ENCODE measurements at regions of chr6 and their contacts with region 1.

Region 1: GRCh38 chr6:85354761-85355618 is 94.9 kb upstream of the NT5E start:
- DNase-seq: peak; percentile 78
- ATAC-seq: peak; percentile 98
- H3K4me3 Mint-ChIP-seq: no peak overlapping the region
- H3K27ac Mint-ChIP-seq: no peak overlapping the region
- H3K4me1 Mint-ChIP-seq: no peaks in the 10 kb centered on the region
- H3K27me3 Mint-ChIP-seq: no peaks in the 10 kb centered on the region
- CTCF ChIP-seq: peak; percentile 98

Region 2: GRCh38 chr6:85404502-85405174 is 49.6 kb after region 1 on chr6:
- CTCF ChIA-PET with region 1: no interaction called
- POLR2A ChIA-PET with region 1: no interaction called
- DNase-seq: no peak
- ATAC-seq: no peak
- H3K4me3 Mint-ChIP-seq: no peak overlapping the region
- H3K27ac Mint-ChIP-seq: no peak overlapping the region
- H3K4me1 Mint-ChIP-seq: peaks cover 51% of the 10 kb centered on the region
- H3K27me3 Mint-ChIP-seq: peaks cover 2% of the 10 kb centered on the region; the same call in 1 of the 2 replicates
- CTCF ChIP-seq: no peak

Region 3: DNA sequence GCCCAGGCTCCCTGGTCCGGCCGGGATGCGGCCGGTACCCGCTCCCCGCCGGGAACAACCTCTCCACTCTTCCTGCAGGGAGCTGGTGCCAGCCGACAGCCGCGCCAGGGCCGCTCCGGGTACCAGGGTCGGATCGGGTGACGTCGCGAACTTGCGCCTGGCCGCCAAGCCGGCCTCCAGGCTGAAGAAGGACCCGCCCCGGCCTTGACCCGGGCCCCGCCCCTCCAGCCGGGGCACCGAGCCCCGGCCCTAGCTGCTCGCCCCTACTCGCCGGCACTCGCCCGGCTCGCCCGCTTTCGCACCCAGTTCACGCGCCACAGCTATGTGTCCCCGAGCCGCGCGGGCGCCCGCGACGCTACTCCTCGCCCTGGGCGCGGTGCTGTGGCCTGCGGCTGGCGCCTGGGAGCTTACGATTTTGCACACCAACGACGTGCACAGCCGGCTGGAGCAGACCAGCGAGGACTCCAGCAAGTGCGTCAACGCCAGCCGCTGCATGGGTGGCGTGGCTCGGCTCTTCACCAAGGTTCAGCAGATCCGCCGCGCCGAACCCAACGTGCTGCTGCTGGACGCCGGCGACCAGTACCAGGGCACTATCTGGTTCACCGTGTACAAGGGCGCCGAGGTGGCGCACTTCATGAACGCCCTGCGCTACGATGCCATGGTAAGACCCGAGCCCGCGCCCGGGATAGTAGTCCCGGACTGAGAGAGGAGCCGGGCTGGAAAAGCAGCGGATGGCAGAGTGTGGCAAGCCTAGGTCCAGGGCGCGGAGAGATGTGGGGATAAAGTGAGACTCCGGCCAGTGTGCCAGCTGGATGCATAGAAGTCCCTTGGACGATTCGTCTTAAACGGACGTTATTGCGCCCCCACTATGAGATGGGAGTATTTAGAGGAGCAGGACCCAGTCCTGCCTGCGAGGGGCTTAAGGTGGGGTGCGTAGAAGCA is 95.1 kb after region 1 on chr6 and contains the start of gene NT5E:
- CTCF ChIA-PET with region 1: interaction called, 10 read pairs
- POLR2A ChIA-PET with region 1: no interaction called
- DNase-seq: peak; percentile 85
- ATAC-seq: peak; percentile 93
- H3K4me3 Mint-ChIP-seq: peak within 1 kb of the TSS; percentile 80
- H3K27ac Mint-ChIP-seq: no peak within 1 kb of the TSS
- H3K4me1 Mint-ChIP-seq: peaks cover 13% of the 10 kb centered on the region
- H3K27me3 Mint-ChIP-seq: peaks cover 91% of the 10 kb centered on the region
- CTCF ChIP-seq: no peak
- total RNA-seq, gene NT5E: 0.62 to 0.94 TPM (median 0.81 TPM) in 3 replicates

Region 4: GRCh38 chr6:86595641-86596040 is 1240.7 kb after region 1 on chr6:
- CTCF ChIA-PET with region 1: no interaction called
- POLR2A ChIA-PET with region 1: no interaction called
- DNase-seq: no peak
- ATAC-seq: no peak
- H3K4me3 Mint-ChIP-seq: no peak overlapping the region
- H3K27ac Mint-ChIP-seq: no peak overlapping the region
- H3K4me1 Mint-ChIP-seq: peaks cover 4% of the 10 kb centered on the region; the same call in 1 of the 2 replicates
- H3K27me3 Mint-ChIP-seq: no peaks in the 10 kb centered on the region
- CTCF ChIP-seq: no peak